Heart right ventricle (tissue), 16 donors: ENCODE measurements at regions of chr15 and their contacts with region 1.

Region 1: GRCh38 chr15:70826634-70827033 is 27.3 kb downstream of the LARP6 start:
- DNase-seq: no peak
- ATAC-seq: peak in 4 of 8 donors; percentile 35 to 83 (median 56)
- H3K4me3 ChIP-seq: no peak overlapping the region
- H3K27ac ChIP-seq: peak overlapping the region in 1 of 10 donors; percentile 36
- H3K4me1 ChIP-seq: peaks cover 5 to 34% (median 19%) of the 10 kb centered on the region in 9 donors
- H3K27me3 ChIP-seq: no peaks in the 10 kb centered on the region
- CTCF ChIP-seq: no peak

Region 2: DNA sequence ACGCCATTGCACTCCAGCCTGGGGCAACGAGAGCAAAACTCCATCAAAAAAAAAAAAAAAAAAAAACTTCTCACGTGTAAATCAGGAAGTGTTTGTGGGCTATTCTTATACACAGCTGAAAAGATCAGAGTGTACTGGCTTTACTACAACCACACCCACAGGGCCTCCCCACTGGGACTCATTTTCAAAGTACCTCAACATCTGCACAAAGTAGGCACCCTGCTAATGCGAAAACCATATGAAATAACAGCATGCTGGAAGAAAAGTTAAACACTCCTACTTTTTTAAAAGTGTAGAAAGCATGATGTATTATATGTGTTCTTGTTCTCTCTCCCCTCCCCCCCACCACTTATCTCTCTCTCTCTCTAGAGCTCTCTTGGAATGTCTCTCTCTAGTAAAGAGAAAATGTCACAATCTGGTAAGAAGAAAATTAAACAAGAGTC is 74.4 kb before region 1 on chr15:
- intact Hi-C with region 1: no loop called
- DNase-seq: peak; percentile 49 to 65
- ATAC-seq: peak; percentile 70 to 96 (median 90)
- H3K4me3 ChIP-seq: peak overlapping the region in 1 of 10 donors; percentile 3
- H3K27ac ChIP-seq: peak overlapping the region; percentile 28 to 86 (median 69)
- H3K4me1 ChIP-seq: peaks cover 12 to 95% (median 64%) of the 10 kb centered on the region in 9 donors
- H3K27me3 ChIP-seq: no peaks in the 10 kb centered on the region
- CTCF ChIP-seq: no peak

Region 3: GRCh38 chr15:70863450-70864218 is 37.0 kb after region 1 on chr15:
- intact Hi-C with region 1: loop called in 2 of 10 experiments (anchors 5 kb)
- DNase-seq: no peak
- ATAC-seq: peak in 7 of 8 donors; percentile 29 to 79 (median 57)
- H3K4me3 ChIP-seq: no peak overlapping the region
- H3K27ac ChIP-seq: peak overlapping the region in 9 of 10 donors; percentile 31 to 76 (median 55)
- H3K4me1 ChIP-seq: peaks cover 0 to 30% (median 15%) of the 10 kb centered on the region in 9 donors
- H3K27me3 ChIP-seq: no peaks in the 10 kb centered on the region
- CTCF ChIP-seq: no peak

Region 4: GRCh38 chr15:70875001-70875782 is 48.6 kb after region 1 on chr15:
- intact Hi-C with region 1: loop called (anchors 1 to 5 kb)
- DNase-seq: peak in 1 of 2 donors; percentile 21
- ATAC-seq: peak in 7 of 8 donors; percentile 34 to 72 (median 56)
- H3K4me3 ChIP-seq: no peak overlapping the region
- H3K27ac ChIP-seq: no peak overlapping the region
- H3K4me1 ChIP-seq: peaks cover 0 to 11% (median 5%) of the 10 kb centered on the region in 9 donors
- H3K27me3 ChIP-seq: no peaks in the 10 kb centered on the region
- CTCF ChIP-seq: peak in 8 of 9 donors; percentile 45 to 77 (median 63)

Region 5: DNA sequence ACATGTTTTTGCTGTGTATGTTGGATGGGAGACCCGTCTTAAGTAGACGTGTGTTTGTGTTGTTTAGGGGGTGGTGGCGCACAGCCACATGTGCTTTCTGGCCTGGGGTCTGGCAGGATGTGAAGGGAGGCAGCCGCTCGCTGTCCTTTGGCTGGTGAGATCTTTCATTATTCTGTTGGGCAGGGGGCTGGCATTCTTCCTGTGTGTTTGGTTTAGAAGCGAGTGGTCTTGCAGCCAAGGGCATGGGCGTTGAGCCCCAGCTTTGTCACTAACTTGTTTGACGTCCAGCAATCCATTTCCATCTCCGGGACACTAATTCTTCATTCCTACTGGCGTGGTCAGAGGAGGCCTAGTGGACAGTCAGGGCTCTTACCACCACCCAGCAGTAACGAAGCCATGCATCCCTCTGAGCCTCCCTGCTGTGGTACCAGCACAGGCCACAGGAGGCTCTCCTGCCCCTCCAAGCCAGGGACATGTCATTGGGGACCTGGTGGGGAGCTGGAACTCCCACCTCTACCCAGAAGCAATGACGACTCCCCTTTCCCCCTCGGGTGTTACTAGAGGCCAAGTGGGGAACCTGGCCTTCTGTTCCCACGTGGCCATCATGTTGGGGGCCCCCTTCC is 299.3 kb after region 1 on chr15:
- intact Hi-C with region 1: no loop called
- DNase-seq: no peak
- ATAC-seq: peak in 7 of 8 donors; percentile 18 to 58 (median 50)
- H3K4me3 ChIP-seq: no peak overlapping the region
- H3K27ac ChIP-seq: peak overlapping the region in 9 of 10 donors; percentile 12 to 88 (median 78)
- H3K4me1 ChIP-seq: peaks cover 0 to 71% (median 37%) of the 10 kb centered on the region in 9 donors
- H3K27me3 ChIP-seq: no peaks in the 10 kb centered on the region
- CTCF ChIP-seq: peak in 6 of 9 donors; percentile 14 to 35 (median 25)

Region 6: DNA sequence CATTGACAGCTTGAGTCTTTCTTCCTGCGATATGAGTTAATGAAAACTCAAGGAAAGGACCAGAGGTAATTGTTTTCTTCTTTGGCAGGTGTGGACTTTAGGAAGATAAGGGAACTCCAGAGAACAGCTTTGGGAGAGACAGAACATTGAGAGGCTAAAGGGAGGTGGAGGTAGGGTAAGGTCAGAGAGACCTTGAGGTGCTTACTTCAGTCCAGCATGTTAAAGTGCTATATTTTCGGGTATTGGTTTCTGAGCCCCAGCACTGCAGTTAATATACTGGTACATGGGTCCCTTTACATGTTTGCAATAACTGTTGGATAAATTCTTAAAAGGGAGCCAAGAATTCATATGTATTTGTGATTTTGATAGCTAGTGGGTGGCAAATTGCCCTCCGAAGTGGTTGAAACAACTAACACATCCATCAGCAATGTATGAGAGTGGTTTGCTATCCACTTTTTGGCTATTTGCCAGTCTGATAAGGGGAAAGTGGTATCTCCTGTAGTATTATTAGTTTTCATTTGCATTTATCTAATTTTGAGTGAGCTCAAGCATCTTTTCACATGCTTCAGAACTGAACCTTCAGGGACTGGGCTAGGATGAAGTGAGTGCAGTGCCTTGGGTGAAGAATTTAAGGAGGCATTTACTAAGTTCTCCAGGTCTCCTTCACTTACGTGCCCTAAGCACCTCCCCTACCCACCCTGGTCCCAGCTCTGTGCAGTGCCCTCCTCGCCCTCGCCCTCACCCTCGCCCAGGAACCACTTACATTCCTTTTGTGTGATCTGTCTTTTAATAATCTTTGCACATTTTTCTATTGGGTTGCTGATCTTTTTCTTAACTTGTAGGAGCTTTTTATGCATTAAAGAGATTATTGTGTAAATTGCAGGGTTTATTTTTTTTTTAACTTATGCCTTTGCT is 611.0 kb after region 1 on chr15:
- intact Hi-C with region 1: loop called in 2 of 10 experiments (anchors 10 kb)
- DNase-seq: no peak
- ATAC-seq: peak in 2 of 8 donors; percentile 48 to 59
- H3K4me3 ChIP-seq: no peak overlapping the region
- H3K27ac ChIP-seq: peak overlapping the region in 4 of 10 donors; percentile 15 to 32 (median 26)
- H3K4me1 ChIP-seq: peaks cover 0 to 20% (median 6%) of the 10 kb centered on the region in 9 donors
- H3K27me3 ChIP-seq: no peaks in the 10 kb centered on the region
- CTCF ChIP-seq: no peak